ENCODE measurements at regions of chr18 and their contacts with region 1.

Region 1: DNA sequence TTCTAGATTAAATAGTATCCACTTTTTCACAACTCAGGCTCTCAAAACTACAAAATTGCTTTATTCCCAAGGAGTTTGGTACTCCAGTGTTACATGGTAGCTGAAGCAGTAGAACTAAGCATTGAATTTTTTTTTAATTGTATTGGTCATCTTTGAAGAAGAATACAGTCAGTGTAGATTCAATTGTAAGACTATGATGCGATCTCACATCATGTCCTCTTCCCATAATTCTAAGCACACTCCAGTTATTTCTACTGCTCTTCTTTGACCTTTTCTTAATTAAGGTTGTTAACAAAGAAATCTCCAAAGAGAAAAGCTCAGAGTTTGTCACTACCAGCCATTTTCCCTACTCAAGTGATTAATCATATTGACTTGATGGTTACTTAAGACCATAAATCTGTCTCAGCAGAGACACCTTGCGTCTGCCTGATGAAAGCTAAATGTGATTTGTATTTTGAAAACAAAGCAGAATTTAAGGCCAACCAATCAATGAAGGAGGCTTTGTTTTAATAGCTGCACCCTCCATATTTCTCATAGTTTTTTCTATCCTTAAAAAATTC is 130.2 kb downstream of the DTNA start:
- DNase-seq: no peak
- ATAC-seq: no peak
- H3K4me3 ChIP-seq: no peak overlapping the region
- H3K4me3 Mint-ChIP-seq: no peak overlapping the region
- H3K27ac ChIP-seq: no peak overlapping the region
- H3K27ac Mint-ChIP-seq: no peak overlapping the region
- H3K4me1 ChIP-seq: no peaks in the 10 kb centered on the region
- H3K4me1 Mint-ChIP-seq: no peaks in the 10 kb centered on the region
- H3K27me3 ChIP-seq: no peaks in the 10 kb centered on the region
- H3K27me3 Mint-ChIP-seq: no peaks in the 10 kb centered on the region
- CTCF ChIP-seq: no peak

Region 2: GRCh38 chr18:34901299-34901698 is 61.0 kb after region 1 on chr18:
- CTCF ChIA-PET with region 1: no interaction called
- POLR2A ChIA-PET with region 1: no interaction called
- intact Hi-C with region 1: loop called in 1 of 2 experiments (anchors 10 kb)
- DNase-seq: peak in 1 of 9 experiments; percentile 3
- ATAC-seq: no peak
- H3K4me3 ChIP-seq: no peak overlapping the region
- H3K4me3 Mint-ChIP-seq: no peak overlapping the region
- H3K27ac ChIP-seq: no peak overlapping the region
- H3K27ac Mint-ChIP-seq: no peak overlapping the region
- H3K4me1 ChIP-seq: no peaks in the 10 kb centered on the region
- H3K4me1 Mint-ChIP-seq: no peaks in the 10 kb centered on the region
- H3K27me3 ChIP-seq: no peaks in the 10 kb centered on the region
- H3K27me3 Mint-ChIP-seq: no peaks in the 10 kb centered on the region
- CTCF ChIP-seq: no peak

Measured in CD8-positive, alpha-beta T cell (primary cell).